ENCODE measurements at regions of chr7 and their contacts with region 1.

Region 1: DNA sequence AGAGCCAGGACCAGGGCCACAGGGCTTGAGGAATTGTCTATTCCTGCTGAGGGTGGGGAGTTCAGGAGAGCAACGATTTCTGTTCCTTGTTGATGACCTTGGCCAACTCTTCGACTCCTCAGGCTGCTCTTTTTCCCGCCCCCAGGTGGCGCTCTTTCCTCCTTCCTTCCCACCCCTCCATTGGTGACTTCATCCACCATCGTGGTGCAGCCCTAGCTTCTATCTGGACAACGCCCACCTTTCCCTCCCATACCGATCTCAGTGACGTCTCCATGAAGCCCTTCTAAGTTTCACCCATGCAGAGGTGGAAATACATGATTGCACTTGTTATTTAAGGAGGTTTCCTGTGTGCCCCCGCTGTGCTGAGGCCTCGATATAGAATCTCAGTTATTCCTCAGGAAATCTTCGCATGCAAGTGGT is 22.1 kb upstream of the CARD11 start:
- DNase-seq: no peak
- ATAC-seq: no peak
- H3K4me3 ChIP-seq: no peak overlapping the region
- H3K27ac ChIP-seq: no peak overlapping the region
- H3K4me1 ChIP-seq: no peaks in the 10 kb centered on the region
- H3K27me3 ChIP-seq: no peaks in the 10 kb centered on the region

Region 2: GRCh38 chr7:2838873-2839578 is 226.7 kb before region 1 on chr7:
- intact Hi-C with region 1: no loop called
- DNase-seq: no peak
- ATAC-seq: no peak
- H3K4me3 ChIP-seq: no peak overlapping the region
- H3K27ac ChIP-seq: no peak overlapping the region
- H3K4me1 ChIP-seq: peaks cover 0 to 1% of the 10 kb centered on the region in 2 donors
- H3K27me3 ChIP-seq: no peaks in the 10 kb centered on the region

Region 3: DNA sequence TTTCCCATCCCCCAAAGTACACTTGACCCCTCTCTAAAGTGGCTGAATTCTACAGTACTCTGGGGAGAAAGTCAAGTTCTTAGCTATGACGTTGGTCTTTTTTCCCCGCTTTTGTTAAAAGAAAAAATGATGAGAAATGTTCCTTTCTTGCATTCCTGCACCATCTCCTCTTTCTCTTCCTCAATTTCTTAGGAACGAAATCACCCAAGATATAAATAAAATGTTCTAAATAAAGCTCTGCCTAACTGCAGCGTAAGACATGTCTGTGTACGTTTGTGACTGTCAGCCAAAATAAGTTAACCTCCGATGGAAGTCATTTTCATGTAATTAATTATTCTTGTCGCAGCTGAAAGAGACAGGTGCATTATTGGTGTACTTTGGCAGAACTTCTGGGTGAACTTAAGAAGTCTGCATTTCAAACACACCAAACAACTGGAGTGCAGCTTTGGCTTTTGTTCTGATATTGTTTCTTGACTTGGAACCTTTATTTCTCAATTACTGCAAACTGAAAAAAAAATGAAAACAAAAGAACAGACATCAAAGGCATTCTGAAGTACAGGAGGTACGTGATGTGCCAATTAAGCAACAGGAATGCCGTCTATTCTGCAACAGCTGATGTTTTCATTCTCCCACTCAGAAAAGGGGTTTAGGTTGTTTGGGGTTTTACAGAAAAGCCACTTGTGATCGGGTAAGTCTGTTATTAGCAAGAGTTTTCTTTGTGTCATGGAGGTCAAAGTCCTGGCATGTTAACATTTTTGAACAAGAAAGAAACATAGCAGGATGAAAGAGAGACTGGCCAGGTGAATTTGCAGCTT is 152.9 kb after region 1 on chr7:
- intact Hi-C with region 1: loop called in 1 of 2 experiments (anchors 10 kb)
- DNase-seq: no peak
- ATAC-seq: peak; percentile 39
- H3K4me3 ChIP-seq: no peak overlapping the region
- H3K27ac ChIP-seq: peak overlapping the region; percentile 57 to 86
- H3K4me1 ChIP-seq: peaks cover 5 to 6% of the 10 kb centered on the region in 2 donors
- H3K27me3 ChIP-seq: no peaks in the 10 kb centered on the region

Measured in aorta (tissue), 5 donors.